Activated CD4-positive, alpha-beta memory T cell treated with anti-CD3 and anti-CD28 coated beads, Interleukin-2, amount 10 ng/mL, durations not matched to agents 7 days and 5 days (primary cell): ENCODE measurements at regions of chr19 and their contacts with region 1.

Region 1: DNA sequence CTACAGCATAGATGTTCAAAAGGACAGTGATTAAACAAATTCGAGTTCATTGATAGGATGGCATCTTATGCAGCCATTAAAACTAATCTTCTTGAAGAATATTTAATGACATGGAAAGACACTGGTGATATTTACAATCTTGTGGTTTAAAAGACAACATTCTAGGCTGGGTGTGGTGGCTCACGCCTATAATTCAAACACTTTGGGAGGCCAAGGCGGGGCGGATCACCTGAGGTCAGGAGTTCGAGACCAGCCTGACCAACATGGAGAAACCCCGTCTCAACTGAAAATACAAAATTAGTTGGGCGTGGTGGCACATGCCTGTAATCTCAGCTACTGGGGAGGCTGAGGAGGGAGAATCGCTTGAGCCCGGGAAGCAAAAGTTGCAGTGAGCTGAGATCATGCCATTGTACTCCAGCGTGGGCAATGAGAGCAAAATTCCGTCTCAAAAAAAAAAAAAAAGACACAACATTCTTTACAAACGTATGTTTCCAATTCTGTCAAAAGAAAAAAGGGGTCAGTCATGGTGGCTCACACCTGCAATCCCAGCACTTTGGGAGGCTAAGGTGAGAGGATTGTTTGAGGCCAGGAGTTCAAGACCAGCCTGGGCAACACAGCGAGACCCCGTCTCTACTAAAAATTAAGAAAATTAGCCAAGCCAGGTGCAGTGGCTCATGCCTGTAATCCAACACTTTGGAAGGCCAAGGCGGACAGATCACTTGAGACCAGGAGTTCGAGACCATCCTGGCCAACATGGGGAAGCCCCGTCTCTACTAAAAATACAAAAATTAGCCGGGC is 2.5 kb upstream of the PAK4 start:
- DNase-seq: no peak
- H3K4me3 Mint-ChIP-seq: no peak overlapping the region
- H3K27ac Mint-ChIP-seq: no peak overlapping the region
- H3K4me1 Mint-ChIP-seq: peaks cover 43% of the 10 kb centered on the region
- H3K27me3 Mint-ChIP-seq: peaks cover 7% of the 10 kb centered on the region

Region 2: GRCh38 chr19:39110263-39110967 is 12.7 kb before region 1 on chr19:
- CTCF ChIA-PET with region 1: interaction called, 10 read pairs
- POLR2A ChIA-PET with region 1: no interaction called
- DNase-seq: peak; percentile 76
- H3K4me3 Mint-ChIP-seq: no peak overlapping the region
- H3K27ac Mint-ChIP-seq: no peak overlapping the region
- H3K4me1 Mint-ChIP-seq: peaks cover 3% of the 10 kb centered on the region
- H3K27me3 Mint-ChIP-seq: peaks cover 3% of the 10 kb centered on the region

Region 3: GRCh38 chr19:39328046-39328705 is 205.0 kb after region 1 on chr19:
- CTCF ChIA-PET with region 1: interaction called, 18 read pairs
- POLR2A ChIA-PET with region 1: no interaction called
- DNase-seq: peak; percentile 82
- H3K4me3 Mint-ChIP-seq: no peak overlapping the region
- H3K27ac Mint-ChIP-seq: peak overlapping the region; percentile 22
- H3K4me1 Mint-ChIP-seq: peaks cover 41% of the 10 kb centered on the region
- H3K27me3 Mint-ChIP-seq: no peaks in the 10 kb centered on the region